ENCODE measurements at regions of chr3 and their contacts with region 1.

Region 1: DNA sequence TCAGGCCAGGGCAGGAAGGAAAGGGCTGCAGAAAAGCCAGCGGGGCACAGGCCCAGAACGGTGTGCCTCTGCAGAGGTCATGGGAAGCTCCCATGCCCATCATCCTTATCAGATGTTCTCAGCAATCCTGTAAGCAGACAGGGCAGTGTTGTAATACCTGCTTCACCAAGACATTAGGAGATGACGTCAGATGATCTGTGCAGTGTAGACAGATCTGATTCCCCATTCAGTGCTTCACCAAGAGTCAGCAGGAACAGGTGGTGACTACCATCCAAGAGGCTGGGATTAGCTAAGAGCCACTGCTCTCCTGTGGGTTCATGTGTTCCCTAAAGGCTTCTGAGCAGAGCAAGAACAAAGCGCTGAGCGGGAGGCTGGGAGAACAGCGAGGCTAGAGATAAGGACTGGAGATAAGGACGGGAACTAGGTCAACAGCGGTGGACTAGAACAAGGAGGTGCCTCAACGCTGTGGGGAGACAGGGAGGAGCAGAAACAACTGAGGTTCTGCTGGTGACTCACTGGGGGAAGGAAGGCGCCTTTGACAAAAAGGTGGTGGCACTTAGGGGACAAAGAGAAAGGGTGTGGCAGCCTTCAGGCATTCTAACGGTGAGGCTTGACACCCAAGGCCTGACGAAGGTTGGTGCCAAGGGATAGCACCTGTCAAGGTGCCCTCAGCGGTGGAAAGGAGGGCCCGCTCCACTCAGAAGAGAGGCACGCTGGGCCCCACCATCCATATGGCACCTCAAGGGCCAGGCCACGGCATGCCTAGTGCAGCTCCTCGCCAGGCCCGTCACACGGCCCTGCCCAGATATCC is 28.4 kb downstream of the CCDC12 start:
- DNase-seq: peak; percentile 82
- ATAC-seq: peak; percentile 82
- H3K4me3 Mint-ChIP-seq: peak overlapping the region; percentile 62
- H3K27ac Mint-ChIP-seq: peak overlapping the region; percentile 82
- H3K4me1 Mint-ChIP-seq: peaks cover 89% of the 10 kb centered on the region
- H3K27me3 Mint-ChIP-seq: no peaks in the 10 kb centered on the region

Region 2: GRCh38 chr3:46959161-46959511 is 10.9 kb after region 1 on chr3:
- CTCF ChIA-PET with region 1: interaction called, 6 read pairs
- POLR2A ChIA-PET with region 1: interaction called, 10 read pairs
- DNase-seq: no peak
- ATAC-seq: peak; percentile 57
- H3K4me3 Mint-ChIP-seq: no peak overlapping the region
- H3K27ac Mint-ChIP-seq: peak overlapping the region; percentile 83
- H3K4me1 Mint-ChIP-seq: peaks cover 82% of the 10 kb centered on the region
- H3K27me3 Mint-ChIP-seq: no peaks in the 10 kb centered on the region

Region 3: GRCh38 chr3:47035634-47036033 is 87.4 kb after region 1 on chr3:
- CTCF ChIA-PET with region 1: no interaction called
- POLR2A ChIA-PET with region 1: no interaction called
- DNase-seq: no peak
- ATAC-seq: no peak
- H3K4me3 Mint-ChIP-seq: no peak overlapping the region
- H3K27ac Mint-ChIP-seq: no peak overlapping the region
- H3K4me1 Mint-ChIP-seq: peaks cover 44% of the 10 kb centered on the region
- H3K27me3 Mint-ChIP-seq: no peaks in the 10 kb centered on the region

Region 4: GRCh38 chr3:47747558-47747957 is 799.4 kb after region 1 on chr3:
- CTCF ChIA-PET with region 1: no interaction called
- POLR2A ChIA-PET with region 1: no interaction called
- DNase-seq: no peak
- ATAC-seq: no peak
- H3K4me3 Mint-ChIP-seq: no peak overlapping the region
- H3K27ac Mint-ChIP-seq: no peak overlapping the region
- H3K4me1 Mint-ChIP-seq: peaks cover 4% of the 10 kb centered on the region
- H3K27me3 Mint-ChIP-seq: no peaks in the 10 kb centered on the region

Measured in activated CD8-positive, alpha-beta T cell treated with anti-CD3 and anti-CD28 coated beads, Interleukin-2, amount 10 ng/mL, durations not matched to agents 7 days and 5 days (primary cell).